ENCODE measurements at regions of chr5 and their contacts with region 1.

Region 1: GRCh38 chr5:41843456-41844370 is 26.5 kb downstream of the OXCT1 start:
- DNase-seq: peak; percentile 49
- H3K4me3 ChIP-seq: no peak overlapping the region
- H3K27ac ChIP-seq: no peak overlapping the region
- H3K27me3 ChIP-seq: no peaks in the 10 kb centered on the region
- CTCF ChIP-seq: peak; percentile 75

Region 2: GRCh38 chr5:41707853-41708603 is 135.7 kb before region 1 on chr5:
- in situ Hi-C with region 1: loop called (anchors 25 kb)
- DNase-seq: peak; percentile 61
- H3K4me3 ChIP-seq: no peak overlapping the region
- H3K27ac ChIP-seq: no peak overlapping the region
- H3K27me3 ChIP-seq: no peaks in the 10 kb centered on the region
- CTCF ChIP-seq: peak; percentile 69

Measured in brain microvascular endothelial cell (primary cell).